ENCODE measurements at regions of chr13 and their contacts with region 1.

Region 1: GRCh38 chr13:59677966-59678814 is 485.5 kb downstream of the DIAPH3 start:
- DNase-seq: peak; percentile 6 to 41
- ATAC-seq: peak in 1 of 2 experiments; percentile 80; a peak in 3 of 6 replicates
- H3K4me3 ChIP-seq: no peak overlapping the region
- H3K27ac ChIP-seq: no peak overlapping the region
- H3K4me1 ChIP-seq: no peaks in the 10 kb centered on the region
- CTCF ChIP-seq: peak; percentile 52
- EP300 ChIP-seq: no peak
- POLR2A ChIP-seq: no peak
- RAD21 ChIP-seq: peak; percentile 52 to 65; a peak in 4 of 5 replicates

Region 2: GRCh38 chr13:59391696-59392095 is 286.5 kb before region 1 on chr13:
- CTCF ChIA-PET with region 1: interaction called, 11 read pairs
- POLR2A ChIA-PET with region 1: no interaction called
- DNase-seq: peak; percentile 2 to 38
- ATAC-seq: peak in 1 of 2 experiments; percentile 77; a peak in 3 of 6 replicates
- H3K4me3 ChIP-seq: no peak overlapping the region
- H3K27ac ChIP-seq: no peak overlapping the region
- H3K4me1 ChIP-seq: no peaks in the 10 kb centered on the region
- CTCF ChIP-seq: peak; percentile 41; the same call in 2 of the 3 replicates
- EP300 ChIP-seq: no peak
- POLR2A ChIP-seq: no peak
- RAD21 ChIP-seq: peak; percentile 28 to 47; a peak in 3 of 5 replicates

Region 3: DNA sequence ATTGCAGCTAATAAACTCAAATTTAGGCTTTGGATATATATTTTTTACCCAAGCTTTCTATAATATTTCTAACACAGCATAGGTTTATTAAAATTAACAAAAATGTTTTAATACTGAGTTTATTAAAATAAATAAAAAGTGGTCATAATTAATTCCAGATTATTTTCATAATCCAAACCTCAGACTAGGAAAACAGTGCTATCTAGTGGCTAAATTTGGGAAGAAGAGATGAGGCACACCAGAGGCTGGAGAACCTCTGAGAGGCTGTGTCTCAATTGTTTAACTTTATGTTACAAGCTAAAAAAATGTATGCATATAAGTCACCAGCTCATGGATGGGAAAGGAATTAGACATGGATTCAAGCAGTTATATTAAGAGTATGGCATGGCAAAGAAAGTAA is 93.1 kb after region 1 on chr13:
- CTCF ChIA-PET with region 1: interaction called, 10 read pairs
- POLR2A ChIA-PET with region 1: no interaction called
- DNase-seq: peak in 1 of 2 experiments; percentile 2
- ATAC-seq: no peak
- H3K4me3 ChIP-seq: no peak overlapping the region
- H3K27ac ChIP-seq: no peak overlapping the region
- H3K4me1 ChIP-seq: no peaks in the 10 kb centered on the region
- CTCF ChIP-seq: peak; percentile 52
- EP300 ChIP-seq: no peak
- POLR2A ChIP-seq: no peak
- RAD21 ChIP-seq: peak; percentile 43 to 56; a peak in 4 of 5 replicates

Region 4: DNA sequence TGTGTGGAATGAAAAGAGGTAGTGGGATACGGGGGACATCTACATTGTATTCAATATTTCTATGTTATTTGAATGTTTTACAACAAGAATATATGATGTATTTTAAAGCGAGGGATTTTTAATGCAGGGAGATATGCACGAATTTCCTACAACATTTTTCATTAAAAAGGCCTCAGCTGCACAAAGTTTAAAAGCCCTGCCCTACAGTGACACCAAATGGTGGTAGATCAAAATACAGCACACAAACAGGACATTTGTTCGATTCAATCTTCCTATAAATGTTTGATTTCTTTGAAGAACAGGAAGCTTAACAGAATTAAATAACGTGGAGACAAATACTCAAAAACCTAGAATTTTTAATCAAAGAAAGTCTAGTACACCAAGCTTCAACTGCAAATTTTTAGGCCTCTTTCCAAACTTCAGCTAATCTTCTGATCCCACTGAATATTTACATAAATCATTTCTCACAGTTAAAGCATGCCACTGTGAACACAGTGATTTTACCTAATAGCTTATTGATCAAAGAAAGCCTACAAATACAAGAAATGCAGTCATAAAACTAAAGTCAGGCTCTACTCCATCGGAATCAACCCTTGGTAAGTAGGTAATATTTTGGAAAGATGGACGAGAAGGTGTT is 228.3 kb after region 1 on chr13:
- CTCF ChIA-PET with region 1: interaction called, 38 read pairs
- POLR2A ChIA-PET with region 1: no interaction called
- DNase-seq: peak in 1 of 2 experiments; percentile 9
- ATAC-seq: peak in 1 of 2 experiments; percentile 41; a peak in 1 of 6 replicates
- H3K4me3 ChIP-seq: no peak overlapping the region
- H3K27ac ChIP-seq: no peak overlapping the region
- H3K4me1 ChIP-seq: no peaks in the 10 kb centered on the region
- CTCF ChIP-seq: peak; percentile 59
- EP300 ChIP-seq: no peak
- POLR2A ChIP-seq: no peak
- RAD21 ChIP-seq: peak; percentile 58 to 62

Region 5: DNA sequence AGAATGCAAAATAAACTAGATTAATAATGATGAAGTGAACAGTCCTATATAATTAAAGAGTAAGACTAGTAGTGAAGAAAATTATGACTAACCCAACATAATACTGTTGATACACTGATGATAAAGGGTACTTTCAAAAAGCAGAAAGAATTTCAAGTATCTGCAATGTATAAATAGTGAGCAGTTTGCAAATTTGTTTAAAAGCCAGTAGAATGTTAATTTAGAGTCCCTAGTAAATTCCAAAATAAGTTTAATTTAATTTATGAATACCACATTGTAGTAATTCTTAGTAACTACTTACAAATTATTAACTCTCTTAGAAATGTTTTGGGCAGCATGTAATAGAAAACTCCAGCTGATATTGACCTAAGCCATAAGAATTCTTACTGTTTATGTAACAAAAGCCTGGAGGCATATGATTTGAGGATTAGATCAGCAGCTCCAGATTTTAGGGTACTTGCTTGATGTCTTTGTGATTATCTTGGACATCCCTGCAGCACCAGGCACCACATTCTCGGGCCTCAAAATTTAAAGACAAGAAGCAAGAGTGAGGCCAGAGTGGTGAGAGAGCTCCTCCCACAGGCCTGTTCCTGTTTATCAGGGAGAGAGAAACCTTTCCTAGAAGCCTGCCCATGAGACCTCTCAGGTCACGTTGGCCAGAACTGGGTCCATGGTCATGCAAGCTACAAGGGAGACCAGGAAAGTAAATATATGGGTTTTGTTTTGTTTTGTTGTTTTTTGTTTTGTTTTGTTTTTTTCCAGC is 651.2 kb after region 1 on chr13:
- CTCF ChIA-PET with region 1: interaction called, 10 read pairs
- POLR2A ChIA-PET with region 1: no interaction called
- DNase-seq: peak in 1 of 2 experiments; percentile 21
- ATAC-seq: peak; percentile 59 to 81; a peak in 4 of 6 replicates
- H3K4me3 ChIP-seq: no peak overlapping the region
- H3K27ac ChIP-seq: no peak overlapping the region
- H3K4me1 ChIP-seq: no peaks in the 10 kb centered on the region
- CTCF ChIP-seq: 0 out of 3 replicates have a peak, but pooled peaks have one; percentile 19
- EP300 ChIP-seq: no peak
- POLR2A ChIP-seq: no peak
- RAD21 ChIP-seq: peak; percentile 42 to 52; a peak in 4 of 5 replicates

Measured in A549 (cell line).